B cell (primary cell): ENCODE measurements at regions of chr3 and their contacts with region 1.

Region 1: GRCh38 chr3:195271116-195271858 is at the start of gene XXYLT1:
- DNase-seq: peak; percentile 91
- ATAC-seq: peak; percentile 84
- H3K4me3 ChIP-seq: peak within 1 kb of the TSS; percentile 76 to 90 (median 84)
- H3K4me3 Mint-ChIP-seq: peak within 1 kb of the TSS; percentile 91
- H3K27ac ChIP-seq: peak within 1 kb of the TSS; percentile 27 to 52
- H3K27ac Mint-ChIP-seq: peak within 1 kb of the TSS; percentile 88
- H3K4me1 ChIP-seq: peaks cover 17 to 18% of the 10 kb centered on the region in 2 donors
- H3K4me1 Mint-ChIP-seq: peaks cover 19% of the 10 kb centered on the region
- H3K27me3 ChIP-seq: no peaks in the 10 kb centered on the region
- H3K27me3 Mint-ChIP-seq: no peaks in the 10 kb centered on the region
- CTCF ChIP-seq: peak; percentile 83
- total RNA-seq, gene XXYLT1: 8.8 and 11.2 TPM in 2 replicates

Region 2: DNA sequence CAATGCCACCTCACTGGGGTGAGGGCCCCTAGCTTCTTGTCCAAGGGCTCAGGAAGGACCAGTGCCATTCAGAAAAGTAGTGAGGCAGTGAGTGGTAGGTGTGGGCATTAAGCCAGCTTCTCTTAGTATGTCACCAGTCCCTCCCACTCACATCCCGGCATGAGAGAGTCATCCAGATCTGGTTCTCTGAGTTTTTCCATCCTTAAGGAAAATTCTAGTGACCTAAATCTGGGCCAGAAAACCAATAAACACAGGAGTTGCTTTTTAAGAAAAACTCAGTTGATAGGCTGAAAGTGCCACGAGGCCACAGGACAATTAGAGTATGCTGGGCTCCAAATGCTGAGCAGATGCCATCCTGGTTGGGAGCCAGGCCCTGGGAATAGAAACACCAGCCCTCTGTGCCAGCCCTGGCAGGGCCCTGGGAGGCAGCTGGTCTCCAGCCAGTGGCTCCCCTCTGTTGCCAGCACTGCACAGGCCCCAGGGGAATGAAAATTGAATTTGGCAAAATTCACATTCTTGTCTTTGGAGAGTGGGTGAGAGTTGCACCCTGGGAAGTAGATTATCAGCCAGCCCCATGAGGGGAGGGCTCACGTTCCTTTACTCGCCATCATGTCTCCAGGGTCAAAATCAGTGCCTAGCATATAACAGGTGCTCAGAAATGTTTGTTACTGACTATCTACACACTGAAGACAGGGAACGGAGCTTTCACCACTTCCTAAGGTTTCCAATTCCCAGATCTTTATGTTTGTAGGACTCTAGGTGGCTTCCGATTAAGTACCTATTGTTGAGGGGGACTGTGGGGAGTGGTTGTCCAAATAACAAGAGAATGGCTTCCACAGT is 532.8 kb before region 1 on chr3:
- CTCF ChIA-PET with region 1: no interaction called
- POLR2A ChIA-PET with region 1: no interaction called
- intact Hi-C with region 1: loop called (anchors 2 kb)
- DNase-seq: no peak
- ATAC-seq: no peak
- H3K4me3 ChIP-seq: no peak overlapping the region
- H3K4me3 Mint-ChIP-seq: no peak overlapping the region
- H3K27ac ChIP-seq: no peak overlapping the region
- H3K27ac Mint-ChIP-seq: peak overlapping the region; percentile 27
- H3K4me1 ChIP-seq: peaks cover 25 to 35% of the 10 kb centered on the region in 2 donors
- H3K4me1 Mint-ChIP-seq: peaks cover 28% of the 10 kb centered on the region
- H3K27me3 ChIP-seq: no peaks in the 10 kb centered on the region
- H3K27me3 Mint-ChIP-seq: no peaks in the 10 kb centered on the region
- CTCF ChIP-seq: no peak

Region 3: GRCh38 chr3:195080571-195081151 is 190.6 kb before region 1 on chr3:
- CTCF ChIA-PET with region 1: no interaction called
- POLR2A ChIA-PET with region 1: no interaction called
- intact Hi-C with region 1: no loop called
- DNase-seq: no peak
- ATAC-seq: no peak
- H3K4me3 ChIP-seq: no peak overlapping the region
- H3K4me3 Mint-ChIP-seq: no peak overlapping the region
- H3K27ac ChIP-seq: no peak overlapping the region
- H3K27ac Mint-ChIP-seq: no peak overlapping the region
- H3K4me1 ChIP-seq: peaks cover 21 to 35% of the 10 kb centered on the region in 2 donors
- H3K4me1 Mint-ChIP-seq: peaks cover 42% of the 10 kb centered on the region
- H3K27me3 ChIP-seq: no peaks in the 10 kb centered on the region
- H3K27me3 Mint-ChIP-seq: no peaks in the 10 kb centered on the region
- CTCF ChIP-seq: no peak

Region 4: GRCh38 chr3:195259475-195260279 is 11.6 kb before region 1 on chr3:
- CTCF ChIA-PET with region 1: interaction called, 47 read pairs
- POLR2A ChIA-PET with region 1: interaction called, 6 read pairs
- intact Hi-C with region 1: loop called (anchors 1 kb)
- DNase-seq: peak; percentile 95
- ATAC-seq: peak; percentile 90
- H3K4me3 ChIP-seq: peak overlapping the region in 4 of 5 experiments; percentile 63 to 89 (median 72)
- H3K4me3 Mint-ChIP-seq: peak overlapping the region; percentile 74
- H3K27ac ChIP-seq: peak overlapping the region; percentile 78 to 87
- H3K27ac Mint-ChIP-seq: peak overlapping the region; percentile 92
- H3K4me1 ChIP-seq: peaks cover 16 to 23% of the 10 kb centered on the region in 2 donors
- H3K4me1 Mint-ChIP-seq: peaks cover 19% of the 10 kb centered on the region
- H3K27me3 ChIP-seq: no peaks in the 10 kb centered on the region
- H3K27me3 Mint-ChIP-seq: no peaks in the 10 kb centered on the region
- CTCF ChIP-seq: peak; percentile 73

Region 5: DNA sequence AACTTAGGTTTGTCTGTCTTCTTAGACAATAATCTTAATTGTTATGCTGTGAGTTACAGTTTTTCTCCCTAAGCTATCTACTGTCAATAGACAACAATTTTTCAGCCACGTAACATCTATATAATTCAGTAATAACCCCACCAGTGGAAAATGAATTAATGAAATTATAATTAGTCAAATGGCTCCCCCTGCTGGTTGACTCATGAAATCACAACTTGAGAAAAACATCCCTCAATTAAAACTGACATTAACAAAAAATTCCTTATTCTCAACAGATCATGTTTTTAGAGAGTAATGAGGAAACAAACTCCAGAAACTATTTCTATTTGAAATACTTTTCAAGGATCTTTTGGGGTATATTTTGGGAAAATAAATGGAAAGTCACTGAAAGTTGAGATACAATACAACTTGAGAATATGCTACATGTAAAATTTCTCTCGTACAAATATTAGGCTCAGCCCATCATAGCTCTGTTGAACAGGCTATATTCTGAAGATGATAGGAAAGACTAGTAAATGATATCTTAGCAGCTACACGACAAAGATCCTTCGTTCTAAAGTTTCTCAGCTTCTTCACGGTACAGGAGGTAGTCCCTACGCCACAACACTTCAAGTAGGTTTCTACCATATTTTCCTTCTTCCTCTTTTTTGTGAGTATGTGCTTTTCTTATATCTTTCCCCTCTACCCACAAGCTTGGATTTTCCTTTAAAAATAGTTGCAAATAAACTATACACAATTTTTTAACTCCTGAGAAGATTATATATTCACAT is 251.2 kb after region 1 on chr3:
- CTCF ChIA-PET with region 1: interaction called, 203 read pairs
- POLR2A ChIA-PET with region 1: interaction called, 5 read pairs
- intact Hi-C with region 1: loop called (anchors 1 kb)
- DNase-seq: peak; percentile 63
- ATAC-seq: peak; percentile 33
- H3K4me3 ChIP-seq: no peak overlapping the region
- H3K4me3 Mint-ChIP-seq: no peak overlapping the region
- H3K27ac ChIP-seq: peak overlapping the region in 1 of 2 donors; percentile 34
- H3K27ac Mint-ChIP-seq: peak overlapping the region; percentile 42
- H3K4me1 ChIP-seq: peaks cover 4 to 7% of the 10 kb centered on the region in 2 donors
- H3K4me1 Mint-ChIP-seq: peaks cover 18% of the 10 kb centered on the region
- H3K27me3 ChIP-seq: no peaks in the 10 kb centered on the region
- H3K27me3 Mint-ChIP-seq: no peaks in the 10 kb centered on the region
- CTCF ChIP-seq: peak; percentile 96

Region 6: DNA sequence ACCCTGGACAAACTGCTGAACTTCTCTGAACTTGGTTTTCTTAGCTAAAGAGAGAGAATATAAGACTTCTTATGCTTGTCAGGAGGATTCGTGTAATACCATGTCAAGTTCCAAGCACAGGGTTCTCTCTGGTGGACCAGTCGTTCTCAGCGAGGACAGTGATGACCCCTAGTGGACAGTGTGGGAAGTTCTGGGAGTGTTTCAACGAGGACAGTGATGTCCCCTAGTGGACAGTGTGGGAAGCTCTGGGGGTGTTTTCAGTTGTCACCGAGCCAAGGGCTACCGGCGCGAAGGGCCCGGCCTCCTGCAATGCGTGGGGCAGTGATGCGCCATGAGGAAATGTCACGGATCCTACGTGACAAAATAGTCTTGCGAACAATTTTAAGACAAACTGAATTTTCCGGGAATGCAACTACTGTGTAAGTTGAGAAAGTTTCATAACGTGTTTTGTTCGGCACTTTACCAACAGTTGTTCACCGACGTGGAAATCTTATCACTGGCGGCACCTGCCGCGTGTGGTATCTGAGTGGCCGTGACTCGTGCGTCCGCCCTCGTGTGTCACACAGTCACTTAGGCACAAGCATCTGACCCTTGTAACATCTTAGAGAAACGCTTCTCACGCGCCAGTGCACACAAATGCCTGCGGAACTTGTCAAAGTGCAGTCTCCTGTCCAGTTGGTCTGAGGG is 579.7 kb after region 1 on chr3:
- CTCF ChIA-PET with region 1: interaction called, 3 read pairs
- POLR2A ChIA-PET with region 1: no interaction called
- intact Hi-C with region 1: loop called (anchors 2 kb)
- DNase-seq: peak; percentile 93
- ATAC-seq: peak; percentile 100
- H3K4me3 ChIP-seq: peak overlapping the region in 2 of 5 experiments; percentile 12 to 15
- H3K4me3 Mint-ChIP-seq: peak overlapping the region; percentile 57
- H3K27ac ChIP-seq: no peak overlapping the region
- H3K27ac Mint-ChIP-seq: peak overlapping the region; percentile 53
- H3K4me1 ChIP-seq: peaks cover 4 to 8% of the 10 kb centered on the region in 2 donors
- H3K4me1 Mint-ChIP-seq: peaks cover 7% of the 10 kb centered on the region
- H3K27me3 ChIP-seq: no peaks in the 10 kb centered on the region
- H3K27me3 Mint-ChIP-seq: peaks cover 27% of the 10 kb centered on the region
- CTCF ChIP-seq: peak; percentile 100